ENCODE measurements at regions of chr3 and their contacts with region 1.

Region 1: GRCh38 chr3:158434412-158435038 is 136.5 kb upstream of the MLF1 start:
- DNase-seq: no peak
- ATAC-seq: peak in 1 of 2 donors; percentile 73
- H3K4me3 ChIP-seq: no peak overlapping the region
- H3K27ac ChIP-seq: no peak overlapping the region
- H3K4me1 ChIP-seq: no peaks in the 10 kb centered on the region
- H3K27me3 ChIP-seq: no peaks in the 10 kb centered on the region
- CTCF ChIP-seq: peak; percentile 73

Region 2: DNA sequence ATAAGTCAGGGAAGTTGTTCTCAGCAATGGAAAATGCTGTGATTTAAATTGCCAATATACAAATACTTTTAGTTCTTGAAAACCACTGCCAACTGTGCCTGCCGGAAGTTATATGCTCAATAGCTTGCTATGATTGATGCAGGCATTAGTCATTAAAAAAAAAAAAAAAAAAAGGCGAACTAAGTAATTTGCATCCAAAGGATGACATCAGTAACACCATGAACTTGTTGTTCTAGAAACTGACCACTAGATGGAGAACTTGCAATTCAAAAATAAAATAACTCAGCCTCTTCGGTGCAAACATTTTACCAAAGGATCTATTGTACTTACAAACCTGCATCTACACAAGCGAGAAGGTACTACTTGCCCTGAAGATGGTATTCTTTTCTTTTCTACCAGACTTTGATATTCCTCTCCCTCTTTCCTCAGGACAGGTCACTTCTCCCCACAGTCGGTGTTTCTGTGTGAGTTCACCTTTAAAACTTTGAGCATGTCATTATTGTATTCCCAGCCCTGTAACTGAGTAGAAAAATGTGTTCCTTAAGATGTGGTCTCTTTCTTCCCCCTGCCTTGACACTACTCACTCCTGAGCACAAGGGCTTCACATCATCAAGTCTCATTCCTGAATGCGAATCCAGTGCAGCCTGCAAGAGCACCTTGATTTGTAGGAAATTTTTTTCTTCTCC is 816.3 kb before region 1 on chr3:
- intact Hi-C with region 1: loop called (anchors 10 kb)
- DNase-seq: no peak
- ATAC-seq: peak; percentile 32 to 50
- H3K4me3 ChIP-seq: no peak overlapping the region
- H3K27ac ChIP-seq: no peak overlapping the region
- H3K4me1 ChIP-seq: no peaks in the 10 kb centered on the region
- H3K27me3 ChIP-seq: peaks cover 4% of the 10 kb centered on the region
- CTCF ChIP-seq: peak; percentile 64

Region 3: GRCh38 chr3:158384019-158384418 is 50.5 kb before region 1 on chr3:
- intact Hi-C with region 1: no loop called
- DNase-seq: no peak
- ATAC-seq: no peak
- H3K4me3 ChIP-seq: no peak overlapping the region
- H3K27ac ChIP-seq: no peak overlapping the region
- H3K4me1 ChIP-seq: no peaks in the 10 kb centered on the region
- H3K27me3 ChIP-seq: no peaks in the 10 kb centered on the region
- CTCF ChIP-seq: no peak

Region 4: GRCh38 chr3:158522221-158523136 is 88.0 kb after region 1 on chr3:
- intact Hi-C with region 1: no loop called
- DNase-seq: no peak
- ATAC-seq: no peak
- H3K4me3 ChIP-seq: no peak overlapping the region
- H3K27ac ChIP-seq: no peak overlapping the region
- H3K4me1 ChIP-seq: no peaks in the 10 kb centered on the region
- H3K27me3 ChIP-seq: no peaks in the 10 kb centered on the region
- CTCF ChIP-seq: no peak